ENCODE measurements at regions of chr3 and their contacts with region 1.

Region 1: DNA sequence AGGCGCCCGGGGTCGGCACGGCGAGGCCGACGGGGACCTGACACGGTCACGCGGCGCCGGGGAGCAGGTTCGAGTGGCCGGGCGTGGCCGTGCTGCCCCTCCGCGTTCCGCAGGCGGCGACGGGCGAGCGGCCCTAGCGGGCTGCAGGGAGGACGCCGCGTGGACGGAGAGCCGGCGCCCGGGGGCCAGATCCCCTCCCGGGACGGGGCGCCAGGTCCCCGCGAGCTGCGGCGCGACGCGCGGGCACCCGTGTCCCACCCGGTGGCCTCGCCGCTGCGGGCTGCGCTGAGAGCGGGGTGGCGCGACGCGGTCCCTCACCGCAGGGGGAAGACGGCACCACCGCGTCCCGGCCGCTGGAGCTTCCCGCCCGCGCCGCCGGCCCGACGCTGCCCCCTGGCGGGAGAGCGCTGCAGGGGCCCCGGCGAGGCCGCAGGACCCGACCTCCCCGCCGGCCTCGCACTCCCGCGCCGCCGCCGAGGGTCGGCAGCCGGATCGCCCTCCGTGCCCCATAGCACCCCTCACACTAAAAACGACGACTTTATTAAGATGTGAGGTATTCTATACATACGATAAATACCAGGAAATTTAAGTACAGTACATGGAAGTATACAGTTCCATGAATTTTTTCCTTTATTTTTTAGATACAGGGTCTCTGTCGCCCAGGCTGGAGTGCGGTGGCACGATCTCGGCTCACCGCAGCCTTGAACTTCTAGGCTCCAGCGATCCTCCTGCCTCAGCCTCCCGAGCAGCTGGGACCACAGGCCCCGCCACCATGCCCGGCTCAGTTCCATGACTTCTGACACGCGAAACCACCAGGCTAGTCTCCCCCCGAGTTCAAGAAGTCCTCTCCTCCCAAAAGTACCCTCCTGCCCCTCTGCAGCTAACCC is 1.3 kb upstream of the PIGZ start:
- DNase-seq: peak; percentile 69 to 85
- ATAC-seq: peak; percentile 80 to 84 (median 82)
- H3K4me3 ChIP-seq: no peak overlapping the region
- H3K4me3 Mint-ChIP-seq: peak overlapping the region; percentile 82
- H3K27ac ChIP-seq: no peak overlapping the region
- H3K27ac Mint-ChIP-seq: peak overlapping the region in 1 of 2 donors; percentile 35
- H3K4me1 ChIP-seq: peaks cover 14% of the 10 kb centered on the region
- H3K4me1 Mint-ChIP-seq: peaks cover 5 to 25% of the 10 kb centered on the region in 2 donors
- H3K27me3 ChIP-seq: no peaks in the 10 kb centered on the region
- H3K27me3 Mint-ChIP-seq: no peaks in the 10 kb centered on the region
- CTCF ChIP-seq: peak; percentile 93

Region 2: GRCh38 chr3:196537319-196537984 is 432.5 kb before region 1 on chr3:
- intact Hi-C with region 1: loop called (anchors 5 kb)
- DNase-seq: peak; percentile 47 to 80
- ATAC-seq: no peak
- H3K4me3 ChIP-seq: no peak overlapping the region
- H3K4me3 Mint-ChIP-seq: no peak overlapping the region
- H3K27ac ChIP-seq: no peak overlapping the region
- H3K27ac Mint-ChIP-seq: no peak overlapping the region
- H3K4me1 ChIP-seq: no peaks in the 10 kb centered on the region
- H3K4me1 Mint-ChIP-seq: no peaks in the 10 kb centered on the region
- H3K27me3 ChIP-seq: no peaks in the 10 kb centered on the region
- H3K27me3 Mint-ChIP-seq: peaks cover 0 to 3% of the 10 kb centered on the region in 2 donors
- CTCF ChIP-seq: peak; percentile 89

Region 3: GRCh38 chr3:197149528-197149927 is 179.6 kb after region 1 on chr3:
- intact Hi-C with region 1: no loop called
- DNase-seq: no peak
- ATAC-seq: no peak
- H3K4me3 ChIP-seq: no peak overlapping the region
- H3K4me3 Mint-ChIP-seq: no peak overlapping the region
- H3K27ac ChIP-seq: no peak overlapping the region
- H3K27ac Mint-ChIP-seq: no peak overlapping the region
- H3K4me1 ChIP-seq: no peaks in the 10 kb centered on the region
- H3K4me1 Mint-ChIP-seq: peaks cover 11 to 23% of the 10 kb centered on the region in 2 donors
- H3K27me3 ChIP-seq: no peaks in the 10 kb centered on the region
- H3K27me3 Mint-ChIP-seq: no peaks in the 10 kb centered on the region
- CTCF ChIP-seq: no peak

Measured in natural killer cell (primary cell).